Natural killer cell (primary cell): ENCODE measurements at regions of chr4 and their contacts with region 1.

Region 1: DNA sequence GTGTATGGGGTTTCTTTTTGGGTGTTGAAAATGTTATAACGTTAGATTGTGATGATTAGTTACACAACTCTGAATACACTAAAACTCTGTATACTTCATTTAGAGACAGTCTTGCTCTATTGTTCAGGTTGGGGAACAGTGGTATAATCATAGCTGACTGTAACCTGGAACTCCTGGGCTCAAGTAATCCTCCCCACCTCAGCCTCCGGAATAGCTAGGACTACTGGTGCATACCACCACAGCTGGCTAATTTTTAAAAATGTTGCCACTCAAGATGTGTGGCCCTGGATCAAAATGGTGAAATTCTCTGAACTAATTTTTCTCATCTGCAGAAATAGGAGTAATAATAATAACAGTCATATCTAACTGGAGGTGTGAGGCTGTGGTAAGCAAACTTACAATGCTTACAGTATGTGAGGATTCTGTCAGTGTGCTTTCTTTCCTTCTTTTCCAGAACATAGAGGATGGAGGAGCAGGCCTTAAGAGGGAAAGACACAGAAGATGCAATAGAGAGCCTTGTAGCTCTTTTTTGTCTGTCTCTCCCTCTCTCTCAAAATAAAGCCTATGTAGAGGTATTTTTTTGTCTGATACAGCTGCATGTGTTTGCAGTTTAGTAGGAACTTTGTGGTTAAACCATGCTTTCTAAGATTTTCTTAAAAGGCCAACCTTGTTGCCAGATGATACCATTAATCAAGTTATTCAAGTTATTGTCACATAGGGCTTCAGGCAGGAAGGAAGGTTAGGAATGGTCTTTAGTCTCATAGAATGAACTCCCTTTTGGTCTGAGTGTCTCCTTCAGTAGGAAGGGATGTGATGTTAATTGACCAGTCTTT is 7.5 kb downstream of the ADD1 start:
- DNase-seq: peak in 1 of 2 donors; percentile 35
- ATAC-seq: peak; percentile 19 to 33 (median 27)
- H3K4me3 ChIP-seq: no peak overlapping the region
- H3K4me3 Mint-ChIP-seq: peak overlapping the region; percentile 68
- H3K27ac ChIP-seq: peak overlapping the region; percentile 53
- H3K27ac Mint-ChIP-seq: peak overlapping the region; percentile 90 to 94
- H3K4me1 ChIP-seq: peaks cover 72% of the 10 kb centered on the region
- H3K4me1 Mint-ChIP-seq: peaks cover 73 to 76% of the 10 kb centered on the region in 2 donors
- H3K27me3 ChIP-seq: no peaks in the 10 kb centered on the region
- H3K27me3 Mint-ChIP-seq: no peaks in the 10 kb centered on the region
- CTCF ChIP-seq: no peak

Region 2: GRCh38 chr4:2837904-2838496 is 13.2 kb before region 1 on chr4:
- intact Hi-C with region 1: loop called (anchors 2 kb)
- DNase-seq: peak; percentile 68 to 91
- ATAC-seq: peak; percentile 89 to 94 (median 89)
- H3K4me3 ChIP-seq: peak overlapping the region; percentile 18
- H3K4me3 Mint-ChIP-seq: peak overlapping the region; percentile 87
- H3K27ac ChIP-seq: peak overlapping the region; percentile 77
- H3K27ac Mint-ChIP-seq: peak overlapping the region; percentile 84 to 88
- H3K4me1 ChIP-seq: peaks cover 80% of the 10 kb centered on the region
- H3K4me1 Mint-ChIP-seq: peaks cover 76 to 87% of the 10 kb centered on the region in 2 donors
- H3K27me3 ChIP-seq: no peaks in the 10 kb centered on the region
- H3K27me3 Mint-ChIP-seq: no peaks in the 10 kb centered on the region
- CTCF ChIP-seq: no peak

Region 3: GRCh38 chr4:2934813-2935761 is 83.9 kb after region 1 on chr4:
- intact Hi-C with region 1: loop called (anchors 5 kb)
- DNase-seq: peak; percentile 98
- ATAC-seq: peak; percentile 78 to 86 (median 83)
- H3K4me3 ChIP-seq: peak overlapping the region; percentile 55
- H3K4me3 Mint-ChIP-seq: peak overlapping the region; percentile 78
- H3K27ac ChIP-seq: peak overlapping the region; percentile 65
- H3K27ac Mint-ChIP-seq: peak overlapping the region; percentile 71 to 83
- H3K4me1 ChIP-seq: peaks cover 60% of the 10 kb centered on the region
- H3K4me1 Mint-ChIP-seq: peaks cover 39 to 44% of the 10 kb centered on the region in 2 donors
- H3K27me3 ChIP-seq: no peaks in the 10 kb centered on the region
- H3K27me3 Mint-ChIP-seq: no peaks in the 10 kb centered on the region
- CTCF ChIP-seq: no peak

Region 4: GRCh38 chr4:4440333-4441061 is 1589.3 kb after region 1 on chr4:
- intact Hi-C with region 1: no loop called
- DNase-seq: no peak
- ATAC-seq: no peak
- H3K4me3 ChIP-seq: no peak overlapping the region
- H3K4me3 Mint-ChIP-seq: no peak overlapping the region
- H3K27ac ChIP-seq: no peak overlapping the region
- H3K27ac Mint-ChIP-seq: no peak overlapping the region
- H3K4me1 ChIP-seq: no peaks in the 10 kb centered on the region
- H3K4me1 Mint-ChIP-seq: peaks cover 0 to 4% of the 10 kb centered on the region in 2 donors
- H3K27me3 ChIP-seq: no peaks in the 10 kb centered on the region
- H3K27me3 Mint-ChIP-seq: no peaks in the 10 kb centered on the region
- CTCF ChIP-seq: no peak